ENCODE measurements at regions of chr19 and their contacts with region 1.

Region 1: GRCh38 chr19:30743702-30744101 is 371.5 kb downstream of the ZNF536 start:
- DNase-seq: no peak
- H3K4me3 ChIP-seq: no peak overlapping the region
- H3K27ac ChIP-seq: no peak overlapping the region
- H3K4me1 ChIP-seq: no peaks in the 10 kb centered on the region
- CTCF ChIP-seq: no peak

Region 2: DNA sequence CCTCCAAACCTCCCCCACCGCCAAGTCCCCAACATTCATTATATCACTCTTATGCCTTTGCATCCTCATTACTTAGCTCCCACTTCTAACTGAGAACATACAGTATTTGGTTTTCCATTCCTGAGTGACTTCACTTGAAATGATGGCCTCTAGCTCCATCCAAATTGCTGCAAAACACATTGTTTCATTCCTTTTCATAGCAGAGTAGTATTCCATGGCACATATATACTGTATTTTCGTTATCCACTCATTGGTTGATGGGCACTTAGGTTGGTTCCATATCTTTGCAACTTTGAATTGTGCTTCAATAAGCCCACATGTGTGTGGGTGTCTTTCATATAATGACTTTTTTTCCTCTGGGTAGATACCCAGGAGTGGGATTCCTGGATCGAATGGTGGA is 138.4 kb before region 1 on chr19:
- CTCF ChIA-PET with region 1: interaction called, 11 read pairs
- POLR2A ChIA-PET with region 1: no interaction called
- intact Hi-C with region 1: no loop called
- DNase-seq: no peak
- H3K4me3 ChIP-seq: no peak overlapping the region
- H3K27ac ChIP-seq: no peak overlapping the region
- H3K4me1 ChIP-seq: no peaks in the 10 kb centered on the region
- CTCF ChIP-seq: no peak

Measured in OCI-LY7 (cell line).